BJ (cell line): ENCODE measurements at regions of chr11 and their contacts with region 1.

Region 1: GRCh38 chr11:68373815-68374501 is 61.6 kb downstream of the LRP5 start:
- DNase-seq: no peak
- H3K4me3 ChIP-seq: no peak overlapping the region
- H3K27me3 ChIP-seq: no peaks in the 10 kb centered on the region
- CTCF ChIP-seq: no peak

Region 2: GRCh38 chr11:68383976-68384501 is 10.1 kb after region 1 on chr11:
- CTCF ChIA-PET with region 1: interaction called, 24 read pairs
- POLR2A ChIA-PET with region 1: interaction called, 4 read pairs
- DNase-seq: no peak
- H3K4me3 ChIP-seq: no peak overlapping the region
- H3K27me3 ChIP-seq: no peaks in the 10 kb centered on the region
- CTCF ChIP-seq: peak; percentile 97